Common myeloid progenitor, CD34-positive (primary cell): ENCODE measurements at regions of chr1 and their contacts with region 1.

Region 1: GRCh38 chr1:145845514-145846161 is at the start of gene NUDT17:
- DNase-seq: peak; percentile 76 to 83 (median 79)
- H3K4me3 ChIP-seq: peak within 1 kb of the TSS; percentile 75 to 90 (median 81)
- H3K27ac ChIP-seq: peak within 1 kb of the TSS; percentile 27 to 74
- H3K4me1 ChIP-seq: peaks cover 0 to 24% (median 17%) of the 10 kb centered on the region in 4 experiments
- H3K27me3 ChIP-seq: no peaks in the 10 kb centered on the region

Region 2: GRCh38 chr1:145720877-145721671 is 124.6 kb before region 1 on chr1:
- CTCF ChIA-PET with region 1: no interaction called
- POLR2A ChIA-PET with region 1: no interaction called
- DNase-seq: peak; percentile 39 to 65 (median 63)
- H3K4me3 ChIP-seq: peak overlapping the region; percentile 5 to 75 (median 53)
- H3K27ac ChIP-seq: no peak overlapping the region
- H3K4me1 ChIP-seq: peaks cover 0 to 9% (median 9%) of the 10 kb centered on the region in 4 experiments
- H3K27me3 ChIP-seq: peaks cover 0 to 24% (median 7%) of the 10 kb centered on the region in 5 experiments

Region 3: GRCh38 chr1:145736191-145736590 is 109.4 kb before region 1 on chr1:
- CTCF ChIA-PET with region 1: no interaction called
- POLR2A ChIA-PET with region 1: no interaction called
- DNase-seq: no peak
- H3K4me3 ChIP-seq: no peak overlapping the region
- H3K27ac ChIP-seq: no peak overlapping the region
- H3K4me1 ChIP-seq: no peaks in the 10 kb centered on the region
- H3K27me3 ChIP-seq: no peaks in the 10 kb centered on the region

Region 4: DNA sequence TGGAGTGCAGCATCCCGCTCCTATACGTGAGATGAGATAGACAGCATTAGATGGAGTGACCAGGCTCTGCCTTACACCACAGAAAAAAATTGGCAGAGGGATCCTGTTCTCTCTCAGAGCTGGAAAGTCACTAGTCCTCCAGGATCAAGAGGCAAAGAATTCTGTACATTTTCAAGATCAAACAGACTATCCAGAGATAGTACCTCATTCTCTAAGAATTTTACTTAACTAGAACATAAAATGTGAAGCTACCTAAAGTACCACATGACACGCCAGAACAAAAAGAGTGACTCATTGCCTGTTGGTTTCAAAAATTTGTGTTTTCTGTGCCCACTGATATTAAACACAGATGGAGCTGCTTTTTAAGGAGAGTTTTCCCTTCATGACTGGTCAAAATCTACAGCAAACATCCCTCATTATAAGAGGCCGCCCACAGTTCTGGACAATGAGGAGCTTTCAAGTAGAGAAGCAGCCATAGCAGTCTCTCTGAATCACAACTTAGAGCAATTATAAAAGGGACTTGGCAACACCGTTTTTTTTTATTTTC is 94.1 kb before region 1 on chr1:
- CTCF ChIA-PET with region 1: no interaction called
- POLR2A ChIA-PET with region 1: no interaction called
- DNase-seq: no peak
- H3K4me3 ChIP-seq: no peak overlapping the region
- H3K27ac ChIP-seq: no peak overlapping the region
- H3K4me1 ChIP-seq: no peaks in the 10 kb centered on the region
- H3K27me3 ChIP-seq: no peaks in the 10 kb centered on the region

Region 5: DNA sequence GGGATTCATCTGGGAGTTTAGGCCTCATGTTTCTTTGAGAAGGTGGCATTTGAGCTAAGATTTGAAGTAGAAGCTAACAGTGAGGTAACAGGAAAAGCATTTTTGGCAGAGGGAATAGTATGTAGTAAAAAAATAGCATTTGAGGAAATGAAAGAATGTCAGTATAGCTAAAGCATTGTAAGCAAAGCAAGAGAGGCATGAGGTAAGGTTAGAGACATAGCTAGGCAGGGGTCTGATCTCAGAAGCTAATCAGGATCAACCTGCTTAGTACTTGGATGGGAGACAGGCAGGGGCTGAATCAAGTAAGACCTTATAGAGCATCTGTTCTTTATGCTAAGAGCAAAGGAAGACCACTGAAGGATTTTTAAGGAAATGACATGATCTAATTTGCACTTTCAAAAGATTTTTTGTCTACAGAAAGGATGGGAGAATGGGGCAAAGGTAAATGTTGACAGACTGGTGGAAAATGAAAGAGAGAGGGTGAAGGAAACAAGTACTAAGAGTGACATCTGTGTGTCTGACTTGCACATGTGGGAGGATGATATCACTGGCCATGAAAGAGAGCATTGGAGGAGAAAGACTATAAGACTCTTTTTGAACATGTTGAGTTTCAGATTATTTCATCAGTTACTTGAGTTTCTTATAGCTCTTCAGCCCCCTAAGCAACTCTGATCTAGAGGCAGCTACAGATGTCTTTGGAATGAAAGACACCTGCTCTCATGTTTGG is 17.5 kb before region 1 on chr1:
- CTCF ChIA-PET with region 1: interaction called, 24 read pairs
- POLR2A ChIA-PET with region 1: interaction called, 6 read pairs
- DNase-seq: no peak
- H3K4me3 ChIP-seq: no peak overlapping the region
- H3K27ac ChIP-seq: peak overlapping the region in 1 of 2 experiments; percentile 19
- H3K4me1 ChIP-seq: peaks cover 0 to 18% (median 6%) of the 10 kb centered on the region in 4 experiments
- H3K27me3 ChIP-seq: no peaks in the 10 kb centered on the region

Region 6: DNA sequence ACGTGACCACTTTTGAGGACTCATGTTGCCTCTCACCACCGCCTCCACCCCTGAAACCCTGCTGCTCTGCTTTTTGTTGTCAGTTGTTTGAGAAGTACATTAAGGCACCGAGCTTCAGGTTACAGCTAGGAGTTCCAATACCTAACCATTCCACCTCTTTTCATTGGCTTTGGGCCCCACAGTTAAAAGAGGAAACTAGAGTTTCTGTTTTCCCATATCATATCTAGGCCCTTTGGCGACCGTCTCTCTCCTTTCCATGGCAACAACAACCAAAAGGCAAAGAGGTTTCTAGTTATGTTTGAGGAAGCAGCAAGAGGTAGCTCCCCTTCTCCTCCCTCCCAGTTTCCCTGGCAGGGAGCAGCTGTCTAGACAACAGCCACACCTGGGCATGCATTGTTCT is 34.1 kb after region 1 on chr1:
- CTCF ChIA-PET with region 1: interaction called, 47 read pairs
- POLR2A ChIA-PET with region 1: no interaction called
- DNase-seq: peak; percentile 25 to 63 (median 61)
- H3K4me3 ChIP-seq: peak overlapping the region in 1 of 7 experiments; percentile 6
- H3K27ac ChIP-seq: no peak overlapping the region
- H3K4me1 ChIP-seq: peaks cover 4 to 14% (median 7%) of the 10 kb centered on the region in 4 experiments
- H3K27me3 ChIP-seq: peaks cover 0 to 5% (median 0%) of the 10 kb centered on the region in 5 experiments

Region 7: DNA sequence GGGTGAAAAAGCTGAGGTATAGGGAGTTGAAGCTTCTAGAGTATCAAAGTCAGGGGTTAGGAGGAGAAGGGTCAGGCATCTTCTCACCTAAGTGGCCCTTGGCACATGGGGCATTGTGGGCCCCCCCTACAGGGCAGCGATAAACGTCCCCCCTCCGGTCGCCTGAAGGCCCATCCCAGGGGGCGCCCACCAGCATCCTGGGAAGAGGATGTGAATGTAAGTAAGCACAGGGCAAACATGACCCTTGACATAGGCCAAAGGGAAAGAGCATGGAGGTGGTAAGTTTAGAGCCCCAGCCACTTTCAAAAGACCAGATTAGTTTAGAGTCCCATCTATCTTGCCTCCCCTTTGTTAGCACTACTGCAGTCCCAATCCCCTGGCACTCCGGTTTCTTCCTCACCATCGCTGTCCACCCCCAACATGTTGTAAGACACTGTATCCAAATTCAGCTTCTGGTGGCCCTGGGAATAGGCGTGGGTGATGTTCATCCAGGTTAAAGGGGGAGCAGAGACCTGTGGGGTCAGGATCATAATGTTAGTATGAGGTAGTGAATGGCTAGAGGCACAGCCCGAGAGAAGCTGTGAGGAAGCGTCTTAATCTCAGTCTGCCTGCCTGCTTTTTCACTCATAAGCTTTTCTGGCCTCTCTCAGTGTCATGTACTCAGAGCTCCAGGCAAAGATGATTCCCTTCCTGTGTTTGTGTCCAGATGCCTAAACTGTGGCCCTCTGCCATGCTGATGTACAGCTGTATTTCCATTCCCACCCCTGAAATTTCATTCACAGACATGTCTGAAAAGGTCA is 61.5 kb after region 1 on chr1:
- CTCF ChIA-PET with region 1: interaction called, 131 read pairs
- POLR2A ChIA-PET with region 1: interaction called, 3 read pairs
- DNase-seq: no peak
- H3K4me3 ChIP-seq: no peak overlapping the region
- H3K27ac ChIP-seq: no peak overlapping the region
- H3K4me1 ChIP-seq: peaks cover 0 to 2% (median 0%) of the 10 kb centered on the region in 4 experiments
- H3K27me3 ChIP-seq: peaks cover 0 to 2% (median 0%) of the 10 kb centered on the region in 5 experiments

Region 8: DNA sequence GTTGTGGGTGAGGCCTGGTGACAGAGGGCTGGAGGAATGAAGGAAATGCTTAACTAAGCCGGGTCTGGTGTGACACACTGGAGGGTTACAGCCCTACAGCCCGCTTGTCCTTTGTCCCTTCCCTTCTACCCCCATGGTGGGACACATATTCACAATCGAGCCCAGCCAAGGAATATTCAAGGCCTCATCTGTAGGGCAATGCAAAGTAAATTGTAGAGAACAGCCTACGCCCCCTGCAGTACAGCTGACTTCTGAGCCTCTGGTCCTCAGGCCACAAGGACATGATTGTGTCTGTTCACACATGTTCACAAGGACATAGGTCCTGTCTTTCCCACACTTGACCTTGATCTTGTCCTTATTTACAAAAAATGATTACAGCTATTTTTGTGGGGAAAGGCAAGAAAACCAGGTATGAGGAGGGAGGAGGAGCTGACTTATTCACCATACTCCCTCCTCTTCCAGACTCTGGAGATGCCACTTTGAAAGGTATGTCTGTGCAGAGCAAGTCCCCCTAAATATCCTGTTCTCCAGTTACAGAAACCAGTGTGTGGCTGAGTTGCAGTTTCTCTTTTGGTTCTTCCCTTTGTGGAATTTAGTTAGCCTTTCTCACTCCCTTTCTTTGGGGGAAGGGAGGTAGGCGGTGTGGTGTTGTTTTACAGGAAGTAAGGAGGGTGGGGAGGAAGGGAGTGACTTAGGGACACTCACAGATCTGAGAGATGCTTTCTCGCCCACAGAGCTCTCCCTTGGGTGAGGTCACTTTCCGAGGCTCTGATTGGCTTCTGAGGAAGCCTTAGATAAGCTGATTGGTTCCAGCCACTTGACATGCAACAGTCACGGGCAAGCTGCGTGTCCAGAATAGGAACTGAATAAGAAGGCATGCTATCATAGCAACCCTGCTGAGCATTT is 133.5 kb after region 1 on chr1:
- CTCF ChIA-PET with region 1: interaction called, 21 read pairs
- POLR2A ChIA-PET with region 1: no interaction called
- DNase-seq: peak; percentile 94 to 97 (median 97)
- H3K4me3 ChIP-seq: peak overlapping the region in 6 of 7 experiments; percentile 23 to 50 (median 34)
- H3K27ac ChIP-seq: peak overlapping the region; percentile 77 to 94
- H3K4me1 ChIP-seq: peaks cover 34 to 53% (median 46%) of the 10 kb centered on the region in 4 experiments
- H3K27me3 ChIP-seq: no peaks in the 10 kb centered on the region

Region 9: DNA sequence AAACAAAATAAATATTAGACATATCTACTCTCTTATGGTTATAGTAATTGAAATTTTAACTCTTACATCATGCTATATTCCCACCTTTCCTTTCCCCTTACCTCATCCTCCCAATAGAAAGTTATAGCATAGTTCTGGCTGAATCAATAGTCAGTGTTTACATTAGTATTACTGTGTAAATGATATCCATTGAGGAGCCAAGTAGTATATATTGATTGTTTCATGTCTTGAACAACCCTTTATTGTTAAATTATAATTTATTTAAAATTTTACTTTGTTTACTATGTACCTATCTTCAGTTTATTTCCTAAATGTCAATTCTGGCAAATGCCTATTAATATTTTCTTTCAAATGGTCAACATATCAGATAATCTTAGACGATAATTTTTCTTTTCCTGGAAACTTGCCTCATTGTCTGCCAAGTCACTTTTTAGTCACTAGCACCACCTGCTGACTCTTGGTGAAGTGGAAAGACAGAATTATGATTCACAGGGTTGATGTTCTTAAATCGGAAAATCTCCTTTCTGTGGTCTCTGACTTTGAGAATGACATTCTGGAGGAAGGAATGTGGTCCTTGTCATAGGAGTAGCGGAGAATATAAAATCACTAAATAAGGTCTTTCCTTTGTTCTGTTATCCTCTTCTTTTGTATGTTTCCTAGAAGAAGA is 167.2 kb after region 1 on chr1:
- CTCF ChIA-PET with region 1: interaction called, 85 read pairs
- POLR2A ChIA-PET with region 1: interaction called, 3 read pairs
- DNase-seq: peak; percentile 77 to 85 (median 81)
- H3K4me3 ChIP-seq: no peak overlapping the region
- H3K27ac ChIP-seq: no peak overlapping the region
- H3K4me1 ChIP-seq: peaks cover 0 to 5% (median 1%) of the 10 kb centered on the region in 4 experiments
- H3K27me3 ChIP-seq: peaks cover 0 to 11% (median 0%) of the 10 kb centered on the region in 5 experiments